K562 (cell line): ENCODE measurements at regions of chr6 and their contacts with region 1.

Region 1: DNA sequence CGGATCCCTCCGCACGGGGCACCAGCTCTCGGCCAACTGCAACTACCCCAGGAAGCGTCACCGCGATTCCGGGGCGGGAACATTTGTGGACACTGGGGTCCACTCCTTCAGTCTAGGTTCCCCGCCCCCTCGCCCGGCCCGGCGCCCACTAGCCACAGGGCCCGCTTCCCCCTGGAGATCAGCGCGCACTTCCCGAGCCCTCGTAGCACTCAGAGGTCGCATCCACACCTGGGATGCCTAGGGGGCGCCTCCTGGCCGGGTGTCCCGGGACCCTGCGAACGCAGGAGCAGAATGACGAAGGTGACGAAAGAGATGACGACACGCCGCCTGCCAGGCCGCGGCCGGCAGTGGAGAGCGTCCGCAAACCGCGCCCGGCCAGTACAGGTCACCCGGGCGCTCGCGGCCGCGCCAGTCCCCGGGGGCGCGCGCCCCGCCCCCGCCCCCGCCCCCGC is 309 bp upstream of the AIG1 start:
- DNase-seq: peak in 3 of 4 experiments; percentile 84 to 95 (median 95)
- ATAC-seq: peak; percentile 88
- H3K4me3 ChIP-seq: peak overlapping the region; percentile 59
- H3K27ac ChIP-seq: peak overlapping the region; percentile 92
- H3K4me1 ChIP-seq: peaks cover 9 to 37% of the 10 kb centered on the region in 2 experiments; a peak in 4 of 5 replicates
- H3K27me3 ChIP-seq: no peaks in the 10 kb centered on the region
- CTCF ChIP-seq: peak; percentile 16 to 48 (median 31); a peak in 4 of 6 replicates
- EP300 ChIP-seq: no peak
- POLR2A ChIP-seq: peak; percentile 78
- RAD21 ChIP-seq: peak; percentile 42 to 61

Region 2: DNA sequence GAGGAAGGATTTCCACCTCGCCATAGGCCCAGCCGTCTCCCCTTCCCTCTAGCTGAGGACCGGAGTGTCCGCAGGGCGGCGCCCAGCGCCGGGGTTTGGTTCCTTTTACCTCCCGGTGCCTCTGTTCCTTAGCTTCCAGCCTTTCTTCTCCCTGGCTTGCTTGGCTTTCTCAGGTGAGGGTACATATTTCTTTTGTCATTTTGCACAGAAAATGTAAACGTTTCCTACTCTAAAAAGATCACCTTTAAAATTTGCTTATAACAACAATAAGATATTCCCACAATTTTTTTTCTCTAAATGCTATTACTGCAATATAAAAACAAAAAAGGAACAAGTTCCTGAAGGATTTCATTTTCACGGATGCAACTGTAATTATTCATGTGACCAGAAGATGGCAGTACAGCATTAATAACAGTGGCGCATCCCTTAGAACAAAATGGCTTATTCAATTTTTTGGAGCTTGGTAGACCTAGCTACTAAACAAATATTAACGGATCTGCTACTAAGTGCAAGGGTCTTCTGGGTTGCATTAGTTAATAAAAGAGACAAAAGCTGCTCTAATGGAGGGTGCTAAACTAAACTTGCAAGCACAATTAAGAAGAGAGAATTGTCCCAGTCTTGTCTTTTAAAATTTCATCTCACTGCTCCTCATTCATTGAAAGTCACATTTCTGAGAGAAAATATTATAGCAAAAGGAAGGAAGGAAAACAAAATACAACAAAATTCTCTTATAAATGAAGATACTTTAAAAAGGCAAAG is 585.7 kb before region 1 on chr6:
- CTCF ChIA-PET with region 1: no interaction called
- POLR2A ChIA-PET with region 1: no interaction called
- in situ Hi-C with region 1: no loop called
- intact Hi-C with region 1: no loop called
- DNase-seq: peak; percentile 52 to 60 (median 58)
- ATAC-seq: peak; percentile 89
- H3K4me3 ChIP-seq: no peak overlapping the region
- H3K27ac ChIP-seq: no peak overlapping the region
- H3K4me1 ChIP-seq: no peaks in the 10 kb centered on the region
- H3K27me3 ChIP-seq: no peaks in the 10 kb centered on the region
- CTCF ChIP-seq: peak; percentile 61 to 85 (median 64); a peak in 5 of 6 replicates
- EP300 ChIP-seq: no peak
- POLR2A ChIP-seq: no peak
- RAD21 ChIP-seq: peak; percentile 88 to 91

Region 3: GRCh38 chr6:142946181-142946923 is 114.0 kb before region 1 on chr6:
- CTCF ChIA-PET with region 1: no interaction called
- POLR2A ChIA-PET with region 1: no interaction called
- in situ Hi-C with region 1: no loop called
- intact Hi-C with region 1: loop called (anchors 5 kb)
- DNase-seq: peak; percentile 70 to 83 (median 76)
- ATAC-seq: peak; percentile 70
- H3K4me3 ChIP-seq: peak overlapping the region; percentile 51
- H3K27ac ChIP-seq: no peak overlapping the region
- H3K4me1 ChIP-seq: peaks cover 8 to 36% of the 10 kb centered on the region in 2 experiments; a peak in 3 of 5 replicates
- H3K27me3 ChIP-seq: peaks cover 25 to 41% of the 10 kb centered on the region in 2 experiments
- CTCF ChIP-seq: no peak
- EP300 ChIP-seq: no peak
- POLR2A ChIP-seq: no peak
- RAD21 ChIP-seq: no peak

Region 4: DNA sequence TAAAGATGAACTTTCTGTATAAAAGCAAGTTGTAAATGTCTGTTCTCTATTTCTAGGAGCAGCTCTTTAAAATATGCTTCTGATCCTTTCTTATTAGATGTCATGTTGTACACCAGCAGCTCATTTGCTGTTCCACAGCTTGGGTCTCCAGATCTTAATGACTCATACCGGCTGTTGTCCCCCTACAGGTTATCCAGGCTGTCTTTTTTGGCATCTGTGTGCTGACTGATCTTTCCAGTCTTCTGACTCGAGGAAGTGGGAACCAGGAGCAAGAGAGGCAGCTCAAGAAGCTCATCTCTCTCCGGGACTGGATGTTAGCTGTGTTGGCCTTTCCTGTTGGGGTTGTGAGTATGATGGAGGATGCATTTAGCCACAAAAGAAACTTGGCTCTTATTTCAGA is 76.3 kb after region 1 on chr6:
- CTCF ChIA-PET with region 1: no interaction called
- POLR2A ChIA-PET with region 1: no interaction called
- in situ Hi-C with region 1: no loop called
- intact Hi-C with region 1: no loop called
- DNase-seq: peak in 3 of 4 experiments; percentile 23 to 58 (median 38)
- ATAC-seq: peak; percentile 89
- H3K4me3 ChIP-seq: no peak overlapping the region
- H3K27ac ChIP-seq: no peak overlapping the region
- H3K4me1 ChIP-seq: no peaks in the 10 kb centered on the region
- H3K27me3 ChIP-seq: no peaks in the 10 kb centered on the region
- CTCF ChIP-seq: 0 out of 6 replicates have a peak, but pooled peaks of 2 of the 3 experiments have one; percentile 11 to 24
- EP300 ChIP-seq: no peak
- POLR2A ChIP-seq: no peak
- RAD21 ChIP-seq: no peak

Region 5: DNA sequence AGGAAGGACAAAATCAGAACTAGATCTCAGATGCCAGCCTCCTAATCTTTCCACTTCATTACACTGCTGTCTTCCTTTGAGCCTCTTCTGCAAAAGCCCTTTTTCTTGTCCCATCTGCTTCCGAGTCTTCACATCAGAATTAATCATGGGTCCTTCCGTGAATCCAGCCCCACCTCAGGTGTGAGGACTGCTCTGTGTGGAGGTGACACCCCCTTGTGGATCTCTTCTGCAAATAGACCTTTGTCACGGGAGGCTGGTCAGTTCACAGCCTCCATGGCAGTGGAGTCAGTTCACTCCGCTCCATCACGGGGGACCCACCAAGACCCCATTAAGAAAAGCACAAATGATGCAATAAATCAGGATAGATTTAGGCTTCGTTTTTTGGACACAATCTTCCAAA is 219.0 kb after region 1 on chr6:
- CTCF ChIA-PET with region 1: no interaction called
- POLR2A ChIA-PET with region 1: no interaction called
- in situ Hi-C with region 1: no loop called
- intact Hi-C with region 1: loop called (anchors 1 kb)
- DNase-seq: peak; percentile 39 to 64 (median 59)
- ATAC-seq: peak; percentile 99
- H3K4me3 ChIP-seq: no peak overlapping the region
- H3K27ac ChIP-seq: no peak overlapping the region
- H3K4me1 ChIP-seq: no peaks in the 10 kb centered on the region
- H3K27me3 ChIP-seq: no peaks in the 10 kb centered on the region
- CTCF ChIP-seq: peak; percentile 69 to 80 (median 70)
- EP300 ChIP-seq: no peak
- POLR2A ChIP-seq: no peak
- RAD21 ChIP-seq: peak; percentile 60 to 81